Naive thymus-derived CD8-positive, alpha-beta T cell (primary cell): ENCODE measurements at regions of chr15 and their contacts with region 1.

Region 1: GRCh38 chr15:60397772-60398445 is at the start of gene ANXA2:
- DNase-seq: peak; percentile 62 to 91 (median 70)
- ATAC-seq: peak; percentile 83 to 84
- H3K4me3 Mint-ChIP-seq: peak within 1 kb of the TSS; percentile 81 to 95 (median 89)
- H3K27ac Mint-ChIP-seq: peak within 1 kb of the TSS; percentile 79 to 98 (median 89)
- H3K4me1 Mint-ChIP-seq: peaks cover 17 to 57% (median 22%) of the 10 kb centered on the region in 4 donors
- H3K27me3 Mint-ChIP-seq: peaks cover 0 to 6% (median 0%) of the 10 kb centered on the region in 5 donors
- polyA plus RNA-seq, gene ANXA2: 12.2 to 159 (median 22.9) TPM

Region 2: DNA sequence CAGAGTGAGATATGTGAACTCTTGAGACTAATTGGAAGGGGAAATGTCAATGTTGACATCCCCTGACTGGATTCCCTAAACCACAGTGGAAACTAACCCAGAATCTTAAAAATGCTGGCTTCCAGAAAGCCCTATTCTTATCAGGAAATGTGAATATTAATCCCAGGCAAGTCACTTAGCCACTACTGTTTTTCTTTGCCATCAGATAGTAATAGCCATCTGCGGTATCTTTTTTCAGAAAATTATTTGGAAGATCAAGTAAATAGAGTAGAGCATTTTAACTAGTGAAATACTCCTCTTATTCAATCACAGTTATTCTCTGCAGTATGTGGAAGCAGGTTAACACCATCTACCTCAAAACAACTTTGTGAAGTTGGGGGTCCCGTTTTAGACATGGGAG is 512.3 kb after region 1 on chr15:
- POLR2A ChIA-PET with region 1: interaction called, 12 read pairs
- DNase-seq: no peak
- ATAC-seq: no peak
- H3K4me3 Mint-ChIP-seq: no peak overlapping the region
- H3K27ac Mint-ChIP-seq: no peak overlapping the region
- H3K4me1 Mint-ChIP-seq: peaks cover 15 to 29% (median 28%) of the 10 kb centered on the region in 4 donors
- H3K27me3 Mint-ChIP-seq: no peaks in the 10 kb centered on the region